Cardiac septum (tissue), 1 donor: ENCODE measurements at regions of chr5 and their contacts with region 1.

Region 1: GRCh38 chr5:77143998-77144836 is 57.1 kb upstream of the ZBED3 start:
- DNase-seq: peak; percentile 82

Region 2: DNA sequence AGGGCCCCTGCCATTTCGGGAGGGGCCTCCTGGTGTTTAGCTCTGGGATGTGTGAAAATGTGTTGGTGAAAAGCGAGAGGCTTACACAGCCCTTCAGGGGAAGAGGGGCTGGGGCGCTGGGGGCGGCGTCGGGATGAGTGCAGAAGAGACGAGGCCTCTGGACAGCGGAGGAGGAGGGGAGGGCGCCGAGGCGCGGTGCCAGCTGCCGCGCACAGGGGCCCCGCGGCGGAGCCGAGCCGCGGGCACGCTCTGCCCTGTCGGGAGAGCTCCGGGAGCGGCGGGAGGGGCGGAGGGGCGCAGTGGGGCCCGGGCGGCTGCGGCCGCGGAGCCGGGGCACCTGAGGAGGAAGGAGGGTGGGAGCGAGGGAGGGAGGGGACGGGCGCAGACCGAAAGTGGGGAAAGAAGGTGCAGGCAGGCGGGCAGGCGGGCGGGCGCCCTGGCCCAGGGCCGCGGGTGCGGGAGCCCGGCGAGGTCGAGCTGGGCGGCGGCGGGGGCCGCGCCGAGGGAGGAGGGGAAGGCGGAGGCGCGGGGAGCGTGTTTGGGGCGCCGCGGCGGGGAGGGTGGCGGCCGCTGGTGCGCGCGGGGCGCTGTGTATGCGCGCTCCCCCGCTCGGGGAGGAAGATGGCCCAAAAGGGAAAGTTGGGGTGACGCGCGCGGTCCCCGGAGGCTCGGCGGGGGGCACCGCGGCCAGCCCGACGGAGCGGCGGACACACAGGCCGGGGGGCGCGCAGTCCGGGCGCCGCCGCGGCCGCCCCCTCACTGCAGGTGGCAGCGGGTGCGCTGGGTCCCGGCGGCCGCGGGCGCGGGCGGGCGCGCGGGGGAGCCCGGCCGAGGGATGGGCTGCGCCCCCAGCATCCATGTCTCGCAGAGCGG is 66.1 kb after region 1 on chr5 and contains the start of gene PDE8B:
- intact Hi-C with region 1: loop called (anchors 5 kb)
- DNase-seq: no peak
- total RNA-seq, gene PDE8B: 5.7 TPM

Region 3: DNA sequence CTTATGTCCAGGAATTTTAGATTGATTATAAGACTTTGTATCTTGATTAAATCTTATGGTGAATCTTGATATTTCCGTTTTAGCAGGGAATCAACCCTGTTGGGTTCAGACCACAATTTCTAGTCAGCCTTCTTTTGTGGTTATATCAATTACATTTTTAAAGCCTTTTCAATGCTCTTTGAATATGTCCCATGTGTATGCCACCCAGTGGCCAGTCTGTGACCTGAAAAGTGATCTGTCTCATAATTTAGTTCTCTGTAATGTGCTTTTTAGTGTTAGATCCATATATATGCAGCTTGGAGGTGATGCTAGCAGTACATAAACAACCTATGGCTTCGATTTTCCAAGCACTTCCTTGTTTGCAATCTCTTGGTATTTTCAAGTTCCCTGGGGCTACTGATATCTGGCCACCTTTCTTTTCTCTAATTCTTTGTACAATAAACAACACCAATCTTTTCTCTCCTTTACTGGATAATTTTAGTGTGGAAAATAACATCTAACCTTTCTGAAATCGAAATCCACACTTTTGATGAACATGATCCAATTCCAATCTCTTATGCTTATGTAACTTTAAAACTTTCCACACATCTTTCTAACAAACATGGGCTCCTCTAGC is 95.0 kb after region 1 on chr5:
- intact Hi-C with region 1: loop called (anchors 5 kb)
- DNase-seq: no peak

Region 4: DNA sequence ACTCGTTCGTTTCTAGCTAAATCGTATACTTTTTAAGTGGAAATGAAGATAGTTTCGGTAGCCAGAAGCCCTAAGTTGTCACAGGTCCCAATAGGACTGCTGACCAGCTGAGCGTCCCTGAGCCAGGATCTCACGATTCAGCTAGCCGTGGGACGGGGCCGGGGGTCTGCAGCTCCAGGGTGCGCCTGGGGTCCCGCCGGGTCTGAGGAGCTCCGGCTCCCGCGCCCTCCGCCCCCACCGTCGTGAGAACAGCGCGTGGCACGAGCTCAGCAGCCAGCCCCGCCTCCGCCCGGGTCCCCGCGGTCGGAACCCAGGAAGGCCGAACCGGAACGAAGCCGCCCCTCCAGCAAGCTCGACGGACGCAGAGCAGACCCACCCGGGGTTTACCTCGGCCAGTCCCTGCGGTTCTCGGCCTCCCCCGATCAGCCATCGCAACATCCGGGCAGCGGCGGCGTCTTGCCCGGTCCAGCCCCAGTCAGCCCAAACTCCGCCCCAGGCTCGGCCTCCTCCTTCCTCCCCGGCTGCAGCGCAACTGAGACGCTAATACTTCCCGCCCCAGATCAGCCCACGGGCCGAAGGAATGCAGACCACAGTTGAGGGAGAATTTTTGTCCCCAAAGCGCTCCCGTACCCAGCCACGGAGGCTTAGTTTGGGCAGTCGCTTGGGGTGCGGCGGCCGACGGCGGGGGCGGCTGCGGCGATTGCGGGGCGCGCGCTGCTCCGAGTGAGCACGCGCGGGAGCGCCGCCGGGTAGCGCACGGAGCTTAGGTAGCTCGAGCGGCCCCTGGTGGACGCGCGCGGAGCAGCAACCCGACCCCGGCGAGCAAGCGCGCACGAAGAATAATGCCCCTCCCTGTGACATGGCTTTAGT is 347.8 kb after region 1 on chr5 and contains the start of gene WDR41:
- intact Hi-C with region 1: loop called (anchors 1 kb)
- DNase-seq: peak; percentile 96
- total RNA-seq, gene WDR41: 35.1 TPM